T-cell (primary cell): ENCODE measurements at regions of chr22 and their contacts with region 1.

Region 1: DNA sequence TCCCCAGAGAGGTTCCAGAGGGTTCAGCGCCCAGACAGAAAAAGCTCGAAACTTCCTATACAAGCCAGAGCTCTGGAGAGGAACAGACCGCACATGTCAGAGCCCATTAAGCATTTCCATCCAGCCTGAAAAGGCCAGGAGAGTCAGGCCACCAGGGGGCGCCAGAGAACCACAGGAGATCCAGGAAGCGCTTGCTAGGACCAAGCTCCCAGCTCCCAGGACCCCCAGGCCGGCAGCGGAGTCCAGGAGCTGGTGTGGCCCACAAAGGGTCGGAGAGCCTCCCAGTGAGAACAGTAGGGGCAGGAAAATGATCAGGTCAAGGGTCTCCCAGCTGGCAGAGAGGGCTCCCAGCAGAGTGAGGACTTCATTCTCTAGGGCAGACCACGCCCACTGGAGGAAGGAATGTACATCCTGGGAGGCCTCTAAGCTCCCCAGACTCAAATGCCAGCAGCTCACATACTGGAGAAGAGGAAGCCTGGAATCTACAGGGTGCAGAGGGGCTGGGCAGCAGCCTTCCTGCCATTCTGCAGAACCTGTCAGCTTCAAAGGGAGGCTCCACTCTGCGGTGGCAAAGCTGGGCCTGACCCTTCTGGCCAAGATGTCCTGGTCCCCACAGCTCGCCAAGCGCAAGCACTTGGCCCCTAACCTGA is 2.1 kb upstream of the MEI1 start:
- DNase-seq: peak; percentile 59 to 95 (median 86)
- ATAC-seq: peak; percentile 67 to 76 (median 74)
- H3K4me3 ChIP-seq: peak overlapping the region; percentile 18 to 29
- H3K4me3 Mint-ChIP-seq: peak overlapping the region; percentile 23 to 70 (median 64)
- H3K27ac ChIP-seq: peak overlapping the region; percentile 35
- H3K27ac Mint-ChIP-seq: peak overlapping the region; percentile 77 to 80
- H3K4me1 ChIP-seq: peaks cover 2 to 19% of the 10 kb centered on the region in 2 experiments
- H3K4me1 Mint-ChIP-seq: peaks cover 11 to 14% (median 13%) of the 10 kb centered on the region in 3 donors
- H3K27me3 ChIP-seq: no peaks in the 10 kb centered on the region
- H3K27me3 Mint-ChIP-seq: peaks cover 0 to 1% of the 10 kb centered on the region in 2 donors

Region 2: GRCh38 chr22:41613456-41613855 is 83.8 kb before region 1 on chr22:
- CTCF ChIA-PET with region 1: no interaction called
- POLR2A ChIA-PET with region 1: no interaction called
- DNase-seq: no peak
- ATAC-seq: no peak
- H3K4me3 ChIP-seq: no peak overlapping the region
- H3K4me3 Mint-ChIP-seq: no peak overlapping the region
- H3K27ac ChIP-seq: no peak overlapping the region
- H3K27ac Mint-ChIP-seq: no peak overlapping the region
- H3K4me1 ChIP-seq: no peaks in the 10 kb centered on the region
- H3K4me1 Mint-ChIP-seq: peaks cover 4 to 23% (median 22%) of the 10 kb centered on the region in 3 donors
- H3K27me3 ChIP-seq: no peaks in the 10 kb centered on the region
- H3K27me3 Mint-ChIP-seq: no peaks in the 10 kb centered on the region

Region 3: DNA sequence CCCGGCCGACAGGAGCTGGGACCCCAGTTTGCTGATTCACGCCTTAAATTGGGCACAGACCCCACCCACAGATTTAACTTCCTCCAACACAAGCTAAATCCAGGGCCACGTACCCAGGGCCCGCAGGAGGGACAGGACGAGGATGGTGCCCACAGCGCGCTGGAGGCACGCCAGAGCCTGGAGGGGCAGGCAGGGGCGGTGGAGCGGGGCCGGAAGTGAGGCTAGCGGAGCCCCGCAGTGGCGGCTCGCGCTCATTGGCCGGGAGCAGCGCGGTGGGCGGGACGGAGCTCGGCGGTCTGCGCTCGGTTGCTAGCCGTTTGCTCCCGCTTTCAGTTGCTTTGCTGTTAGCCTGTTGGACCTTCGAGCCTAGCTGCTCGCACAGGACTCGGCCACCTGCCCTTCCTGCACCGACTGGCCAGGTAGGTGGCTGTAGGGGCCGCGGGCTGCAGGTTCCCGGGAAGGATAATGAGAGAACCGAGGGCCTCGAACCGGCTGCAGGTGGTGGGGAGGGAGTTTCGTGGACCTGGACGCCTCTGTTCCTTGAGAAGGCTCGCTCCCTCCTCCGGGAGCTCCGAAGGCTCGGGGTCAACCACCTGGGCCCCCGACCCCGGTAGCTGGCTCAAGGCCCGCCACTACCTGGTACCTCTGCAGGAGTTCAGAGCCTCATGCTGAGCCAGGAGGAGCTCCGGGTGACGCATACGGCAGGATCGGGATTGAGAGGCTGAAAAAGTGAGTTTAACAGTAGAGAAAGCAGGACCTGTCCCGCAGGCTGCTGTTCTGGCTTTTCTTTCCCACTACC is 103.3 kb after region 1 on chr22 and contains the start of gene CCDC134:
- CTCF ChIA-PET with region 1: interaction called in 1 of 2 experiments, 18 read pairs
- POLR2A ChIA-PET with region 1: no interaction called
- DNase-seq: peak; percentile 83 to 94 (median 89)
- ATAC-seq: peak; percentile 97 to 99 (median 98)
- H3K4me3 ChIP-seq: peak within 1 kb of the TSS; percentile 92 to 96
- H3K4me3 Mint-ChIP-seq: peak within 1 kb of the TSS; percentile 93 to 97 (median 96)
- H3K27ac ChIP-seq: peak within 1 kb of the TSS; percentile 92
- H3K27ac Mint-ChIP-seq: peak within 1 kb of the TSS; percentile 98 to 99
- H3K4me1 ChIP-seq: peaks cover 13 to 36% of the 10 kb centered on the region in 2 experiments
- H3K4me1 Mint-ChIP-seq: peaks cover 38 to 52% (median 48%) of the 10 kb centered on the region in 3 donors
- H3K27me3 ChIP-seq: no peaks in the 10 kb centered on the region
- H3K27me3 Mint-ChIP-seq: no peaks in the 10 kb centered on the region
- total RNA-seq, gene CCDC134: 14.4 to 21.7 (median 16.7) TPM

Region 4: GRCh38 chr22:41857155-41857859 is 160.1 kb after region 1 on chr22:
- CTCF ChIA-PET with region 1: interaction called, 5 to 10 read pairs
- POLR2A ChIA-PET with region 1: interaction called in 1 of 2 experiments, 3 read pairs
- DNase-seq: peak; percentile 22 to 87 (median 62)
- ATAC-seq: peak; percentile 50 to 74 (median 62)
- H3K4me3 ChIP-seq: no peak overlapping the region
- H3K4me3 Mint-ChIP-seq: peak overlapping the region; percentile 1 to 39 (median 17)
- H3K27ac ChIP-seq: peak overlapping the region; percentile 42
- H3K27ac Mint-ChIP-seq: peak overlapping the region; percentile 62 to 85
- H3K4me1 ChIP-seq: peaks cover 11 to 36% of the 10 kb centered on the region in 2 experiments
- H3K4me1 Mint-ChIP-seq: peaks cover 47 to 72% (median 67%) of the 10 kb centered on the region in 3 donors
- H3K27me3 ChIP-seq: no peaks in the 10 kb centered on the region
- H3K27me3 Mint-ChIP-seq: no peaks in the 10 kb centered on the region